ENCODE measurements at regions of chr1 and their contacts with region 1.

Region 1: GRCh38 chr1:156751758-156752757 is 583 bp upstream of the HDGF start:
- DNase-seq: peak; percentile 91 to 98 (median 93)
- H3K4me3 ChIP-seq: peak overlapping the region; percentile 42 to 88
- H3K4me3 Mint-ChIP-seq: peak overlapping the region; percentile 87 to 97 (median 92)
- H3K27ac ChIP-seq: peak overlapping the region; percentile 82
- H3K27ac Mint-ChIP-seq: peak overlapping the region; percentile 84 to 95 (median 92)
- H3K4me1 ChIP-seq: peaks cover 43% of the 10 kb centered on the region
- H3K4me1 Mint-ChIP-seq: peaks cover 36 to 61% (median 46%) of the 10 kb centered on the region in 4 donors
- H3K27me3 ChIP-seq: no peaks in the 10 kb centered on the region
- H3K27me3 Mint-ChIP-seq: no peaks in the 10 kb centered on the region

Region 2: DNA sequence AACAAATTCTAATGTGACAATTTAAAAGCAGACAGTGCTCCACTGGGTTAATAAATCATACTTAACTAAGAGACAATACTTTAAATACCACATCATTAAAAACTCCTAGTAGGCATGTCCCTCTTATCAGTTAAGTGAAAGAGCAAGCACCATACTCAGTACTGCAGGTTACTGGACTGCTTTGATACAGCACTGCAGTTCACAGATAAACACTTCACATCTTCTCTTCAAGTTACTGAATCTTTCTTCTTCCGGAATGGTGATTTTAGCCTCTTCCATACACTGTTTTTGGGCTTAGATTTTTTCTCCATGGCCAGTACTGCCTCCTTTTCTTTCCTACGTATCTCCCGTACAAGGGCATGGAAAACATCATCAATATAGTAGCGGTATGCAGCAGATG is 851.9 kb before region 1 on chr1:
- CTCF ChIA-PET with region 1: no interaction called
- POLR2A ChIA-PET with region 1: no interaction called
- intact Hi-C with region 1: no loop called
- DNase-seq: no peak
- H3K4me3 ChIP-seq: no peak overlapping the region
- H3K4me3 Mint-ChIP-seq: no peak overlapping the region
- H3K27ac ChIP-seq: no peak overlapping the region
- H3K27ac Mint-ChIP-seq: peak overlapping the region in 1 of 7 donors; percentile 4
- H3K4me1 ChIP-seq: no peaks in the 10 kb centered on the region
- H3K4me1 Mint-ChIP-seq: peaks cover 0 to 6% (median 6%) of the 10 kb centered on the region in 4 donors
- H3K27me3 ChIP-seq: no peaks in the 10 kb centered on the region
- H3K27me3 Mint-ChIP-seq: no peaks in the 10 kb centered on the region

Region 3: DNA sequence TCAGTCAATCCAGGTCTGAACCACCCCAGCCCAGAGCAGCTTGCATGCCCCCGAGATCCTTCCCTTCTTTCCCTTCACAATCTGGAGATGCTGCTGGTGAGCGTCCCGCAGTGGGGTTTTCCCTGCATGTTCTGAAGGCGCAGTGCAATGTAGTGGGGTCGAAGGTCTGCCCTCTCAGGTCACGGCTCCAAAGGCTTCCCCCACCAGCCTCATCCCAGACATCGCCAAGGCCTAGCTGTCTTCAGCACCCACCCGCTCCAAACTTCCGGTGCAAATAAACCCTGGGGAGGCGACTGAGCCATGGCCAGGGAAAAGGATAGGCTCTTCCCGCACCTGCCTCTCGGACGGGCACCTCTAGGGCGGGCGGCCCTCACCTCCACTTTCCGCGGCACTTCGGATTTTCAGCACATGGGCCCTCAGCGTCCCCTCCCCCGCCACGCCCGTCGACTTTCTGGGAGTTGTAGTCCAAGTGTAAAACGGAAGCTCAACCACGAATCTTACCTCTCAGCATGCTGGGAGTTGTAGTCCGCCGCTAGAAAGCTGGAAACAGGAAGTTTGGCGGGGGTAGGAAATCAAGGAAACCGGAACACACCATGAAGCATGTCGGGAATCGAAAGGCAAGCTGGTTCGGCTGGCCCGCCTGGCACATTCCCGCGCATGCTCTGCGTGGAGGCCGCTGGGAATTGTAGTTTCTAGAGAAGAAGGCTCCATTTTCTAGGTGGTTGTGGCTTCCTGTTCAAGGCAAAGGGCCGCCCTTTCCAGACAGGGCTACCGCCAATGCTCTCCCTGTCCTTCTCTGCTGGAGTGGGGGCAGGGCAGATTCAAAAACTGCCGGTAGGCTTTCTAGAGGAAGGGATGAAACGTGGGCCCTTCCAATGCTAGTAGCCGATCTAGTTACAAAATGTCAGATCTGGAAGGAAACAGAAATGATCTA is 11.1 kb before region 1 on chr1 and contains the start of gene MRPL24:
- CTCF ChIA-PET with region 1: interaction called, 15 read pairs
- POLR2A ChIA-PET with region 1: interaction called, 103 read pairs
- intact Hi-C with region 1: loop called (anchors 1 kb)
- DNase-seq: peak; percentile 96 to 100 (median 99)
- H3K4me3 ChIP-seq: peak within 1 kb of the TSS; percentile 83 to 89
- H3K4me3 Mint-ChIP-seq: peak within 1 kb of the TSS; percentile 94 to 99 (median 96)
- H3K27ac ChIP-seq: peak within 1 kb of the TSS; percentile 84
- H3K27ac Mint-ChIP-seq: peak within 1 kb of the TSS; percentile 91 to 100 (median 98)
- H3K4me1 ChIP-seq: peaks cover 25% of the 10 kb centered on the region
- H3K4me1 Mint-ChIP-seq: peaks cover 18 to 45% (median 32%) of the 10 kb centered on the region in 4 donors
- H3K27me3 ChIP-seq: no peaks in the 10 kb centered on the region
- H3K27me3 Mint-ChIP-seq: no peaks in the 10 kb centered on the region
- total RNA-seq, gene MRPL24: 44.1 to 47.4 TPM

Region 4: GRCh38 chr1:156781585-156782186 is 29.6 kb after region 1 on chr1:
- CTCF ChIA-PET with region 1: no interaction called
- POLR2A ChIA-PET with region 1: no interaction called
- intact Hi-C with region 1: no loop called
- DNase-seq: no peak
- H3K4me3 ChIP-seq: no peak overlapping the region
- H3K4me3 Mint-ChIP-seq: no peak overlapping the region
- H3K27ac ChIP-seq: no peak overlapping the region
- H3K27ac Mint-ChIP-seq: peak overlapping the region in 4 of 7 donors; percentile 3 to 47 (median 34)
- H3K4me1 ChIP-seq: peaks cover 11% of the 10 kb centered on the region
- H3K4me1 Mint-ChIP-seq: peaks cover 17 to 35% (median 26%) of the 10 kb centered on the region in 4 donors
- H3K27me3 ChIP-seq: no peaks in the 10 kb centered on the region
- H3K27me3 Mint-ChIP-seq: no peaks in the 10 kb centered on the region

Region 5: DNA sequence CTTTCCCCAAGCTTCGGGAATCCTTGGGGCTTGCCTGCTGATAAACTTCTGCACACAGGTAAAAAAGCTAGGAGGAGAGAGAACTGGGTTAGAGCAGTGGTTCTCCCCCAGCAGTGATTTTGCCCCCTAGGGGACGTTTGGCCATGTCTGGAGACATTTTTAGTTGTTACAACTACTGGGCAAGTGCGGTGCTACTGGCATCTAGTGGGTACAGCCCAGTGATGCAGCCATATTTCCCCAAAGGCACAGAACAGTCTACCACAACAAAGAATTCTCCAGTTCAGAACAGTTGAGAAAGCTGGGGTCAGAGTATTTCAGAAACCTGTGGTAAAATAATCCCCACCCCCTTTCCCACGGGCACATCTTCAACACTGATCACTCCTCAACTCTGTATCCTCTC is 209.7 kb after region 1 on chr1:
- CTCF ChIA-PET with region 1: no interaction called
- POLR2A ChIA-PET with region 1: no interaction called
- intact Hi-C with region 1: no loop called
- DNase-seq: peak in 4 of 5 donors; percentile 37 to 54 (median 38)
- H3K4me3 ChIP-seq: no peak overlapping the region
- H3K4me3 Mint-ChIP-seq: peak overlapping the region in 7 of 8 donors; percentile 49 to 72 (median 59)
- H3K27ac ChIP-seq: no peak overlapping the region
- H3K27ac Mint-ChIP-seq: peak overlapping the region in 3 of 7 donors; percentile 36 to 72 (median 46)
- H3K4me1 ChIP-seq: peaks cover 37% of the 10 kb centered on the region
- H3K4me1 Mint-ChIP-seq: peaks cover 28 to 47% (median 33%) of the 10 kb centered on the region in 4 donors
- H3K27me3 ChIP-seq: no peaks in the 10 kb centered on the region
- H3K27me3 Mint-ChIP-seq: peaks cover 0 to 1% of the 10 kb centered on the region in 2 donors